ENCODE measurements at regions of chr14 and their contacts with region 1.

Region 1: DNA sequence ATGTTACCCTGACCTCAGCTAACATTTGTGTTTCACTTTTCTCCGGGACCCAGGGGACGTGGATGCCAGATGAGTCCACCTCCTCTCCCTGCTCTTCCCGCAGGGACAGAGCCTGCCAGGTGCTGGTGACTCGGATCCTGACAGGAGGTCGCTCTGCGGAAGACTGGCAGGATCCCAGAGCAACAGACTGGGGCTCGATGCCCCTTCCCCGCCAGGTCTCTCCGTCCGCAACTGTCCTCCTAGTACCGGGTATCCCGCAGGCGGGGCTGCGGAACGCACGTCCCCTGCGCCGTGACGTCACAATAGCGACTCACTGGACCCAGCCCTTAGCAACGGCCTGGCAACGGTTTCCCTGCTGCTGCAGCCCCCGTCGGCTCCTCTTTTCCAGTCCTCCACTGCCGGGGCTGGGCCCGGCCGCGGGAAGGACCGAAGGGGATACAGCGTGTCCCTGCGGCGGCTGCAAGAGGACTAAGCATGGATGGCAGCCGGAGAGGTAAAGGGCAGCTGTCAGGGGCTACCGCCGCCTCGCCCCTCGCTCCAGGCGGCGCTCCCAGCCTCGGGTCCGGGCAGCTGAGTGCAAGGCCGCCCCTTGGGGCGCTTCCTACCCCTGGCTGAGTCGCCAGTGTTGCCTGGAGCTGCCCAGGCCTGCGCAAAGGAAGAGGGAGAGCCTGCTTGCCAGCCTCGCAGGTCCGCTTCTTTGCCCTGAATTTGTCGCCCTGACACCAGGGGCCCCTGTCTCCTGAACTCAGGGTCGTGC is at the start of gene SPATA7:
- DNase-seq: peak; percentile 80
- H3K4me3 Mint-ChIP-seq: peak within 1 kb of the TSS; percentile 96
- H3K27ac Mint-ChIP-seq: peak within 1 kb of the TSS; percentile 61
- H3K4me1 Mint-ChIP-seq: peaks cover 15% of the 10 kb centered on the region
- H3K27me3 Mint-ChIP-seq: peaks cover 7% of the 10 kb centered on the region
- total RNA-seq, gene SPATA7: 2.4 and 2.5 TPM in 2 replicates

Region 2: GRCh38 chr14:88189417-88190191 is 195.9 kb before region 1 on chr14:
- intact Hi-C with region 1: loop called (anchors 10 kb)
- DNase-seq: peak; percentile 14
- H3K4me3 Mint-ChIP-seq: no peak overlapping the region
- H3K27ac Mint-ChIP-seq: no peak overlapping the region
- H3K4me1 Mint-ChIP-seq: no peaks in the 10 kb centered on the region
- H3K27me3 Mint-ChIP-seq: peaks cover 11% of the 10 kb centered on the region

Region 3: DNA sequence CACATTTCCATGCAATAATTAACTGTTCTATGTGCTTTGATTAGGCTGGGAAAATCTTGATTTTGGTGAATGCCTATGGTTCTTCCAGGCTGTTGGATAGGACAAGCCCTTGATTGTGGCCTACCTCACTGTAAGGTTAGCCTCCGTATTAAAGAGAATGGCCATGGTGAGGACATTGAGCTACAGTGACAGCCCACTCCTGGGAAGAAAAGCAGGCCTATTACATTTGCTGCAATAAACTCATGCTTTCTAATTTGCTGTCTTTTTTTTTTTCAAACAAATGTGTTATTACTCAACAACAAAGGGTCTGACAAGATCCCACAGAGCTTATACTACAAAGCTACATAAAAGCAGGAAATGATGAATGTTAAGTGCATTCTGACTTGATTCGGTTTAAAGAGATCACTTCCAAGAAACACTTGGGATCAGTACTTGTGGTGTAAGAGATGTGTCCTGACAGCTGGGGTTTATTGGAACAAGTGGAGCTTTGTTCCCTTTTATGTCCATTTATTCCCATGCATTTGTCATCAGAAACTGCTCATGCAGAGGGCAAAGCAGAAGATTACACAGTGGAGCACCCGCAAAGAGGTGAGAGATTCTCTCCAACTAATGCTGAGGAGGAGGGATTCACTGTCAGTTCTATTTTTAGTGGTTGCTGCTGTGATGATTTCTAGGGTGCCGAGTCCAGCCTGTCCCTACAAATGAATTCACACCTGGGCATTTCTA is 33.4 kb before region 1 on chr14:
- intact Hi-C with region 1: no loop called
- DNase-seq: no peak
- H3K4me3 Mint-ChIP-seq: no peak overlapping the region
- H3K27ac Mint-ChIP-seq: no peak overlapping the region
- H3K4me1 Mint-ChIP-seq: no peaks in the 10 kb centered on the region
- H3K27me3 Mint-ChIP-seq: no peaks in the 10 kb centered on the region

Region 4: DNA sequence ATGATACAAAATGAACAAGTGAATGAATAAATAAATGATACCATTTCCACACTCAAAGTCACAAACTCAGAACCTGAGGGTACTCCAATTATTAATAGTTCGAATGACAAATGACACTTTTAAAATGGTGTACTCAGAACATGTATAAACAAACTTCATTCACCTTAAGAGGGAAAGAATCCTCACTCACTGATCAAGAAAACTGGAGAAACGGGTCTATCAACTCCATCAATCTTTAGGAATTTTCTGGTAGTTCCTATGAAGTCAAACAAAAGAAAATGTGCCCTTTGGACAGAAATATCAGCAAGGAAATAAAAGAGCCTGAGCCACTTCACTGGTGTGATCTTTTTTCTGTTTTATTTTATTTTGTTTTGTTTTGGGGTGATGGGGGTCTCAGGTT is 1951.5 kb after region 1 on chr14:
- intact Hi-C with region 1: loop called (anchors 5 kb)
- DNase-seq: no peak
- H3K4me3 Mint-ChIP-seq: no peak overlapping the region
- H3K27ac Mint-ChIP-seq: no peak overlapping the region
- H3K4me1 Mint-ChIP-seq: peaks cover 7% of the 10 kb centered on the region
- H3K27me3 Mint-ChIP-seq: peaks cover 40% of the 10 kb centered on the region